Activated naive CD4-positive, alpha-beta T cell treated with anti-CD3 and anti-CD28 coated beads for 36 hours (primary cell): ENCODE measurements at regions of chr12 and their contacts with region 1.

Region 1: DNA sequence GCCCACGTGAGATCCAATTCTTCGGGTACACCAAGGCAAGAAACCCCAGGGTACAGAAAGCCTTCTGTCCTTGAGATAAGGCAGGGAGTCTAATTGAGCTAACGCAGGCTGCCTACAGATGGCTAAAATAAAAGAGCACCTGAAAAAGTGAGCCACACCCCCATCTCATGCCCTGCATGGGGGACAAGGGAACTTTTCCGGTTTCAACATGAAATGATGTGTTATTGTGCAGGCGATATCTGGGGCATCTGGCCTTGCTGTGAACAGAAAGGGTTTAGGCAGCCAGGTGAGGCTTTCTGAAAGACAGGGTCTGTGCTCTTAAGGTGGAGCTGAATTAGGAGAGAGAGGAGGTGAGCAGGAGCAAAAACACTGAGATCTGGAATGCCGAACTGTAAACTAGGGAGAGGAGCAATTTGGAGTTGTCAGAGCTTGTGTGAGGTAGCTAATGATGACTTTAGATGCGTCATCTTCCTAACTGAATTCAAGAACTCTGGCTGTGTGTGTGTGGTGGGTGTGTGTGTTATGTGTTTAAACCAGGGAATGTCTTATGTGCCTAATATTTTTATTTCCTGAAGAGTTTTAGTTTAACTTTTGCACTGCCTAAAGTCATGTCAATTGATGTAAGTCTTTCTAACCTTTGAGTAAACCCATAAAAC is 20.1 kb upstream of the LDHB start:
- DNase-seq: peak; percentile 28
- H3K4me3 Mint-ChIP-seq: peak overlapping the region; percentile 3
- H3K27ac Mint-ChIP-seq: peak overlapping the region; percentile 70
- H3K4me1 Mint-ChIP-seq: peaks cover 47% of the 10 kb centered on the region
- H3K27me3 Mint-ChIP-seq: no peaks in the 10 kb centered on the region

Region 2: DNA sequence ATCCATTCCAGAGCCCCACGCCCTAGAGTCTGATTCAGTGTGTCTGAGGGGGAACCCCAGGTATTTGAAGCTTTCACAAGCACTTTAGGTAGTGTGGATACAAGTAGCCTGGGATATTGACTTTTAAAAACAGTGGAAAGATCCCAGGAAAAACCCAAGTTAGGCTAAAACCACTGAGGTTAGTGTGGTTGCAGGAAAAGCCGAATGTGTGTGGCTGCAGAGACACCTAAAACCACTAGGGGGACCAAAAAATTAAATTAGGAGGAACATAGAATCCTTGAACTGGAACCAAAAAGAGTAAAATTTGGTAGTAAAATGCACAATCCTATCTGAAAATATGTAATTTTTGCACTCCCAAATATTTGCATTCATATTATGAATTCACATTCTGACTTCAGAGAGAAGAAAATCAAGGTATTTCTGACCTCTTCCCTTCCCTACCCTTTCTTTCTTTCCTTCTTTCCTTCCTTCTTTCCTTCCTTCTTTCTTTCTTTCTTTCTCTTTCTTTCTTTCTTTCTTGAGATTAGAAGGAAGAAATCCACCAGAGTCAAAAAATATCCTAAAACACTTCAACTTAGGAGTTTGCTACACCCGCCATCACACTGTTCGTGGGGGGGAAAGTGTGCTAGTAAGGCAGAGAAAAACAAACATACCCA is 380.9 kb before region 1 on chr12:
- CTCF ChIA-PET with region 1: interaction called, 4 read pairs
- intact Hi-C with region 1: loop called (anchors 1 kb)
- DNase-seq: peak; percentile 10
- H3K4me3 Mint-ChIP-seq: no peak overlapping the region
- H3K27ac Mint-ChIP-seq: no peak overlapping the region
- H3K4me1 Mint-ChIP-seq: peaks cover 2% of the 10 kb centered on the region
- H3K27me3 Mint-ChIP-seq: peaks cover 3% of the 10 kb centered on the region

Region 3: GRCh38 chr12:21350975-21351374 is 326.8 kb before region 1 on chr12:
- CTCF ChIA-PET with region 1: no interaction called
- intact Hi-C with region 1: no loop called
- DNase-seq: no peak
- H3K4me3 Mint-ChIP-seq: no peak overlapping the region
- H3K27ac Mint-ChIP-seq: no peak overlapping the region
- H3K4me1 Mint-ChIP-seq: no peaks in the 10 kb centered on the region
- H3K27me3 Mint-ChIP-seq: peaks cover 7% of the 10 kb centered on the region

Region 4: DNA sequence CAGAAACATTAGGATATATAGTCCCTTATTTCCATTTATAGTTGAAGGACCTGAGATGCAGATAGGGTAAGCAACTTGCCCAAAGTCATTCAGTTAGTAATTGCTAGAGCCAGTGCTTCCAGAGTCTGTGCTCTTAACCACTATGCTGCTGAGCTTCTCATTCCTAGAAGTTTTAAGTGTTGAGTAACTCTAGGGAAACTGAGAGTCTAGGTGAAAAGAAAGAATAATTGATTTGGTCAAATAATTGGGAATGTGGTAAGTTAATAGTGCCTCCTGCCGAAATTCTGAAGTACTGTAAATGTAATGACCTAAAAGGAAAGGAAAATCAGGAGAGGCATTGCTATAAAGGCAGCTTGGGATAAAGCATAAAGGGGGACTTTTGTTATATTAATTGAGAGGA is 226.2 kb before region 1 on chr12:
- CTCF ChIA-PET with region 1: interaction called, 7 read pairs
- intact Hi-C with region 1: loop called (anchors 1 kb)
- DNase-seq: no peak
- H3K4me3 Mint-ChIP-seq: no peak overlapping the region
- H3K27ac Mint-ChIP-seq: no peak overlapping the region
- H3K4me1 Mint-ChIP-seq: peaks cover 26% of the 10 kb centered on the region
- H3K27me3 Mint-ChIP-seq: no peaks in the 10 kb centered on the region

Region 5: GRCh38 chr12:21607701-21608100 is 70.0 kb before region 1 on chr12:
- CTCF ChIA-PET with region 1: interaction called, 11 read pairs
- intact Hi-C with region 1: loop called (anchors 1 kb)
- DNase-seq: no peak
- H3K4me3 Mint-ChIP-seq: no peak overlapping the region
- H3K27ac Mint-ChIP-seq: no peak overlapping the region
- H3K4me1 Mint-ChIP-seq: peaks cover 5% of the 10 kb centered on the region
- H3K27me3 Mint-ChIP-seq: no peaks in the 10 kb centered on the region

Region 6: GRCh38 chr12:21651821-21652220 is 25.9 kb before region 1 on chr12:
- CTCF ChIA-PET with region 1: interaction called, 28 read pairs
- intact Hi-C with region 1: loop called (anchors 1 kb)
- DNase-seq: no peak
- H3K4me3 Mint-ChIP-seq: no peak overlapping the region
- H3K27ac Mint-ChIP-seq: peak overlapping the region; percentile 33
- H3K4me1 Mint-ChIP-seq: peaks cover 80% of the 10 kb centered on the region
- H3K27me3 Mint-ChIP-seq: no peaks in the 10 kb centered on the region

Region 7: GRCh38 chr12:22100958-22101748 is 423.4 kb after region 1 on chr12:
- CTCF ChIA-PET with region 1: no interaction called
- intact Hi-C with region 1: no loop called
- DNase-seq: peak; percentile 76
- H3K4me3 Mint-ChIP-seq: no peak overlapping the region
- H3K27ac Mint-ChIP-seq: no peak overlapping the region
- H3K4me1 Mint-ChIP-seq: peaks cover 14% of the 10 kb centered on the region
- H3K27me3 Mint-ChIP-seq: no peaks in the 10 kb centered on the region

Region 8: GRCh38 chr12:22544038-22544979 is 866.6 kb after region 1 on chr12 and contains the start of gene C2CD5:
- CTCF ChIA-PET with region 1: no interaction called
- intact Hi-C with region 1: loop called (anchors 5 kb)
- DNase-seq: peak; percentile 96
- H3K4me3 Mint-ChIP-seq: peak within 1 kb of the TSS; percentile 91
- H3K27ac Mint-ChIP-seq: peak within 1 kb of the TSS; percentile 91
- H3K4me1 Mint-ChIP-seq: peaks cover 40% of the 10 kb centered on the region
- H3K27me3 Mint-ChIP-seq: no peaks in the 10 kb centered on the region
- total RNA-seq, gene C2CD5: 34.5 to 39.9 TPM